ENCODE measurements at regions of chr9 and their contacts with region 1.

Region 1: GRCh38 chr9:34126207-34127034 is at the start of gene DCAF12:
- DNase-seq: peak; percentile 94
- H3K4me3 Mint-ChIP-seq: peak within 1 kb of the TSS; percentile 93
- H3K27ac Mint-ChIP-seq: peak within 1 kb of the TSS; percentile 93
- H3K4me1 Mint-ChIP-seq: peaks cover 35% of the 10 kb centered on the region
- H3K27me3 Mint-ChIP-seq: no peaks in the 10 kb centered on the region
- total RNA-seq, gene DCAF12: 34.0 to 37.0 TPM

Region 2: DNA sequence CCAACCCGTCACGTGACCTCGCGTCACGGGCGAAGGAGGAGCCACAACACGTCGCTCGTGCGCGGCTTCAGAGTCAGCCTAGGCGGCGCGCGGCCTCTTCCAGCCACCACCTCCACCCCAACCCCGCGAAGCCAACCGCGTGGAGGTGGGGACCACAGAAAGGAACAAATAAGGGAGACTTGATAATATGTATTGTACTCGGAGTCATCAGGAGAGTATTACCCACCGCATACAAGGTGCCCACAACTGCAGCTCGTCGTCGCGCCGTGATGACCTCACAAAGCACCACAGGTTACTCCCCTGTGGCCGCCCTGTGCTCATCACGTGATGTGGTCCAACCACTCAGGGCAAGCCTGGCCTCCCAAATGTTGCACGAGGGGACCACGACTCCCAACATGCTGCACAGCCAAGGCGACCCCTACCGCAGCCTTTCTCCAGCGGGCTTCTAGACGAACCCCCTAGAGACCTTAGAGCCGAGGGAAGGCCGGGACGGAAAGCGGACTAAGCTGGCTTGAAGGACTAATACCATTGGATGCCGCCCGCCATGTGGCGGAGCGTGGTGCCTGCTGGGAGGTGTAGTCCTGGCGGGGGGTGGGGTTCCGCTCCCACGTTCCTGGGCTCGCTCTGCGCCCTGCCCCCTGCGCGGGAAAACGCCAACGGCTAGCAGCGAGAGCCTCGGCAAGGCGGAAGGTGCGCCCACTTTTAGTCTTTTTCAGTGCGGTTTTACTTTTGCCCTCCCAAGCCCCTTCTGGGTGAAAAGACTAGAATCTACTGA is 77.3 kb before region 1 on chr9:
- CTCF ChIA-PET with region 1: no interaction called
- intact Hi-C with region 1: loop called (anchors 1 kb)
- DNase-seq: peak; percentile 98
- H3K4me3 Mint-ChIP-seq: peak overlapping the region; percentile 91
- H3K27ac Mint-ChIP-seq: peak overlapping the region; percentile 98
- H3K4me1 Mint-ChIP-seq: peaks cover 33% of the 10 kb centered on the region
- H3K27me3 Mint-ChIP-seq: no peaks in the 10 kb centered on the region

Region 3: DNA sequence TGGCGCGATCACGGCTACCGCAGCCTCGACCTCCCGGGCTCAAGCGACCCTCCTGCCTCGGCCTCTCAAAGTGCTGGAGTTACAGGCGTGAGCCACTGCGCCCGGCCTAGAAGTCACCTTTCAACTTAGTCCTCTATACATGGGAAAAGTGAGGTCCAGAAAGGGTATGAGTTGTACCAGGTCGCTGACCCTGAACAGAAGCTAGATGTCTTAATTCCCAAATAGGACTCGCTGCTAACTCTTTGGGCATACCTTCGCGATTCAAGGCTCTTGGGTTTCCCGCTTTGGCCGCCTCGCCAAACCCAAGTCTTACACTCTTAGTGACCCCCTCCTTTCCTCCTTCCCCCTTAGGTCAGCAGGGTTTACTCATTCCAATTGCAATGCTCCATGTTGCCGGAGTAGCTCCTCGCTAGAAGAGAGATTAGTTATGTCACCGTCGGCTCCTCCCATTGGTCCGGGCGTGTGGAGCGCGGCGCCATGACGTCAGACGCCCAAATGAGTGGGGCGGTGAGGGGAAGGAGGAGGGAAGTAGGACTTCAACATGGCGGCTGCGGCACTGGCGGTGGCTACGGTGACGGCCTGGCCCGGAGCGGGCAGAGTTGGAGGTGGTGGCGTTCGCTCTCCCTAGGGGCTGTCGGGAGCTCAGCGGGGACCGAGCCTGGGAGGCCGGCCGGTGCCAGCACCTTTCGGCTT is 52.2 kb after region 1 on chr9 and contains the start of gene UBAP1:
- CTCF ChIA-PET with region 1: no interaction called
- intact Hi-C with region 1: loop called (anchors 1 kb)
- DNase-seq: peak; percentile 99
- H3K4me3 Mint-ChIP-seq: peak within 1 kb of the TSS; percentile 84
- H3K27ac Mint-ChIP-seq: peak within 1 kb of the TSS; percentile 94
- H3K4me1 Mint-ChIP-seq: peaks cover 16% of the 10 kb centered on the region
- H3K27me3 Mint-ChIP-seq: no peaks in the 10 kb centered on the region
- total RNA-seq, gene UBAP1: 29.9 to 31.7 TPM

Region 4: DNA sequence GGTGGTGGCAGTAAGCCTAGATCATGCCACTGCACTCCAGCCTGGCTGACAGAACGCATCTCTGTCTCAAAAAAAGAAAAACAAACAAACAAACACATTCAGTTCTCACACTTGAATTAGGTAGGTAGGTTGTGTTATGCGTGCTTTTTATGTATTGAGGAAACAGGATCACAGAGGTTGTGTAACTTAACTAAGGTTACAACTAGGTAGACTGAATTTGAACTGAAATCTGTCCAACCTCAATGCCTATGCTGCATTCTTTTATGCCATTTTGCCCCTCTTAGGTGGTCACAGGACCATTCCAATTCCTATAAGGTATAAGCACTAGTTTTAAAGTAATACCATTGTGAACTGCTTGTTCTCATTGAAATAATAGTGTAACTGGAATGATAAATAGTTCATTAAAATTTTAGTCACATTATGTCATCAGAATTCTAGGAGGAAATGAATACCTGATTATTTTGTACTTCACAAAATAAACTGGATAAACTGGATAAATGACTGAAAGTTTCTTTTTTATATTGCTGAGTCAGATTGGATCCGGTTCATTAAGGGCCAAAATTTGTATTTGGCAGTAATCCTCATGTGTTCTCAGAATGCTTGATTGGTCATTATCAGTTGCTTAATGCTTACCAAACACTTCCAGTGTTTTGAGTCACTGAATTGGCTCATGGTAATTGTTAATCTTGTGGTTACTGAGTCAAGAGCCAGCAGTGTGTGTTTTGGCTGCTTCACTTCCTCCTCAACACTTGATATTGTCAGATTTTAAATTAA is 59.5 kb after region 1 on chr9:
- CTCF ChIA-PET with region 1: no interaction called
- intact Hi-C with region 1: loop called (anchors 2 kb)
- DNase-seq: no peak
- H3K4me3 Mint-ChIP-seq: no peak overlapping the region
- H3K27ac Mint-ChIP-seq: no peak overlapping the region
- H3K4me1 Mint-ChIP-seq: peaks cover 30% of the 10 kb centered on the region
- H3K27me3 Mint-ChIP-seq: no peaks in the 10 kb centered on the region

Measured in activated naive CD4-positive, alpha-beta T cell treated with anti-CD3 and anti-CD28 coated beads for 36 hours (primary cell).